Activated T-helper 2 cell treated with anti-CD3 and anti-CD28 coated beads, Interferon-gamma antibody, Interleukin-2, Interleukin-4, amounts not matched to agents 10 μg/mL and 5 μg/mL and 100 μg/mL, durations not matched to agents 14 hours and 24 hours and 36 hours (primary cell): ENCODE measurements at regions of chr1 and their contacts with region 1.

Region 1: DNA sequence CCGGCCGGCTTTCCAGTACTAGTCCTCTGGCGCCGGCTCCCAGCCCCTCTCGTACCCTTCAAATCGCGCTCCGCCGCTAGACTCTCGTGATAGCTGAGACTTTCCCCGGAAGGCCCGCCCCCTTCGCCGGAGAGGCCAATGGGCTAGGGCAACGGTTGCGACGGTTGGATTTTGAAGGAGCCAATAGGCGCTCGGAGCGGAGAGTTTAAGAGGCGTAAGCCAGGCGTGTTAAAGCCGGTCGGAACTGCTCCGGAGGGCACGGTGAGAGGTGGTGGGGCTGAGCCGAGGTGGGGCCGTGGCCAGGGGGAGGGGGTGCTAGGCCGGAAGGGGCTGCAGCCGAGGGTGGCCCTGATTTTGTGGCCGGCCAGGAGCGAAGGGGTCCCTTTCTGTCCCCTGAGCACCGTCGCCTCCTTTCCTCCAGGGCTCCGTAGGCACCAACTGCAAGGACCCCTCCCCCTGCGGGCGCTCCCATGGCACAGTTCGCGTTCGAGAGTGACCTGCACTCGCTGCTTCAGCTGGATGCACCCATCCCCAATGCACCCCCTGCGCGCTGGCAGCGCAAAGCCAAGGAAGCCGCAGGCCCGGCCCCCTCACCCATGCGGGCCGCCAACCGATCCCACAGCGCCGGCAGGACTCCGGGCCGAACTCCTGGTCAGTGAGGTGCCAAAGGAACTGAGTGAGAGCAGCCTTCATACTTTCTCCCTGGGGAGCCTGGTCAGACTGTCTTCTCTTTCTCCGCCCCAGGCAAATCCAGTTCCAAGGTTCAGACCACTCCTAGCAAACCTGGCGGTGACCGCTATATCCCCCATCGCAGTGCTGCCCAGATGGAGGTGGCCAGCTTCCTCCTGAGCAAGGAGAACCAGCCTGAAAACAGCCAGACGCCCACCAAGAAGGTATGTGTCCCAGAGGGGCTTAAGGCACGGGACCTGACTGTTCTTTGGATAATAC is at the start of gene CDC20:
- DNase-seq: peak; percentile 99
- H3K4me3 Mint-ChIP-seq: peak within 1 kb of the TSS; percentile 93
- H3K27ac Mint-ChIP-seq: peak within 1 kb of the TSS; percentile 88
- H3K4me1 Mint-ChIP-seq: peaks cover 42% of the 10 kb centered on the region
- H3K27me3 Mint-ChIP-seq: no peaks in the 10 kb centered on the region
- total RNA-seq, gene CDC20: 125 and 128 TPM in 2 replicates

Region 2: GRCh38 chr1:43227143-43227764 is 131.8 kb before region 1 on chr1:
- intact Hi-C with region 1: loop called (anchors 1 kb)
- DNase-seq: peak; percentile 62
- H3K4me3 Mint-ChIP-seq: no peak overlapping the region
- H3K27ac Mint-ChIP-seq: no peak overlapping the region
- H3K4me1 Mint-ChIP-seq: peaks cover 1% of the 10 kb centered on the region
- H3K27me3 Mint-ChIP-seq: peaks cover 7% of the 10 kb centered on the region

Region 3: DNA sequence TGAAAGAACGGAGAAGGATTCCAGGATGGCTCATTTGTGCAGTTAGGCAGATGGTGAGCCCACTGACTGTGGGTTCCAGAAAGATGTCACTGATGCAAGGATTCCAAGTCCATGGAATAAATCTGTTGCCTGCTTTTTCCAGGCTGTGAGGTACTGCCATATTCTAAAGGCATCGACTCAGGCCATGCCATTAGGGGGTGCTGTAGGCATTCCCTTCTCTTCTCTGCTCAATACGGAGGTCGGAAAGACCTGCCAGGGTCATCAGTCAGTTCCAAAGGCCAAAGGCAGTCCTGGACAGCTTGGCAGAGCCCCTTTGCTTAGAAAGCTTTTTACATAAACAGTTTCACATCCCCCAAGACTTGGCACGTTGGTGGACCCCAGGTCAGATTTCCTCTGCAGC is 120.9 kb before region 1 on chr1:
- intact Hi-C with region 1: loop called (anchors 1 kb)
- DNase-seq: no peak
- H3K4me3 Mint-ChIP-seq: no peak overlapping the region
- H3K27ac Mint-ChIP-seq: no peak overlapping the region
- H3K4me1 Mint-ChIP-seq: peaks cover 12% of the 10 kb centered on the region
- H3K27me3 Mint-ChIP-seq: no peaks in the 10 kb centered on the region

Region 4: GRCh38 chr1:43622471-43622870 is 263.5 kb after region 1 on chr1:
- intact Hi-C with region 1: no loop called
- DNase-seq: no peak
- H3K4me3 Mint-ChIP-seq: no peak overlapping the region
- H3K27ac Mint-ChIP-seq: no peak overlapping the region
- H3K4me1 Mint-ChIP-seq: no peaks in the 10 kb centered on the region
- H3K27me3 Mint-ChIP-seq: no peaks in the 10 kb centered on the region